Posterior vena cava (tissue), 2 donors: ENCODE measurements at regions of chr7 and their contacts with region 1.

Region 1: GRCh38 chr7:152103691-152104090 is 78.2 kb downstream of the GALNT11 start:
- DNase-seq: no peak

Region 2: DNA sequence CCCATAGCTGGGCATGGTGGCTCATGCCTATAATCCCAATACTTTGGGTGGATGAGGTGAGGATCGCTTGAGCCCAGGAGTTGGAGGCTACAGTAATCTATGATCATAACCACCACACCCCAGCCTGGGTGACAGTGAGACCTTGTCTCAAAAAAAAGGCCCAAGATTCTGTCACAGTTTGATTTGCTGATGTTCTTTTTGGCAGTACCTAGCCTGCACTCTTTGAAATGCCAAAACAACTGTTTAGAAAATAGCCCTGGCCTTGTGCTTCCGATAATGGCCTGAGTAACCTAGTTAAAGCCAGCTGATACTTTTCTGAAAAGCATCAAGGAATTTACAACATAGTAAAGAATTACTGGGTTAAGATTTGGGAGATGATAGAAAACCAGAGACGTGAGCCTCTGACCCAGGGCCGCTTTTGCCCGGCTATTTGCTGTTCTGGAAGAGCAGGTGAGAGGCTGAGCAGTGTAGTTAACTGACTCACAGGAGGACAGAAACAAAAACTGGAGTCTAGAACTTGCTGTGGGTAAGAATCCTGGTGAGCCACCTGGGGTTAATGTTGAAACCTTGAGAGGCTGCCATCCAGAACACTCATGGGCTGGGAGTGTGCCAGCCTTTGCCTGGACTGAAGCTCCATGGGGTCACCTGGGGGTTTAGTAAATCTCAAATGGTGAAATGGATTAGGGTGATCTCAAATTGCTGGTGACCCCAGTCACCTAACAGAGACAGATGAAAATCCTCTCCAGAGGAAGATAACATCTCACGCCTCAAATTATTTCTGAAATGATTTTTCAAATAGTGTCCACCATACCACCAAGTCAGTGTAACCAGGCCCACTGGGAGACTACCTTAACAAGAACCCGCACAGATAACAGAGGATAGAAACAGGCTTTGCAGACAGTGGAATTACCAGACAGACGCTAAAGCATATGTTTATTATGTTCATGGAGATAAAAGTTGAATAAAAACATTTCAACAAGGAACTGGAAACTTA is 26.5 kb before region 1 on chr7:
- intact Hi-C with region 1: loop called in 1 of 2 experiments (anchors 1 kb)
- DNase-seq: no peak

Region 3: DNA sequence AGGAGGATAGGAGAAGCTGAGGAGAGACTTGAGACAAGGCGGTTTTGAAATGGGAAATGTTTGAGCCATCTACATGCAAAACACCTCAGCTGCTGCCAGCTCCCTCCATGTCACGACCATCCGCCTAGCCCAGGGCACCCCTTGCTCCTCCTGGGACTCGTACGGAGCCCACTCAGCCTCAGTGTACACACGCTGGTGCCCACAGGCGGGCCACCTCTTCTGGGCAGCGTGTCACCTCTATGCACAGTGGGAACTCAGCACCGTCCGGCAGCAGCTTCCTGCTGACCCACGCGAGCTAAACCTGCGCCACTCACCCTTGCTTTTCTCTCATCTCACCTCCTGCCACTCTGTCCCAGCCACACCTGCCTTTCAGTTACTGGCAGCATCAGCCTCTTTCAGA is 30.1 kb after region 1 on chr7:
- intact Hi-C with region 1: no loop called
- DNase-seq: no peak